Activated CD8-positive, alpha-beta T cell treated with anti-CD3 and anti-CD28 coated beads, Interleukin-2, amount 10 ng/mL, durations not matched to agents 7 days and 5 days (primary cell): ENCODE measurements at regions of chr5 and their contacts with region 1.

Region 1: DNA sequence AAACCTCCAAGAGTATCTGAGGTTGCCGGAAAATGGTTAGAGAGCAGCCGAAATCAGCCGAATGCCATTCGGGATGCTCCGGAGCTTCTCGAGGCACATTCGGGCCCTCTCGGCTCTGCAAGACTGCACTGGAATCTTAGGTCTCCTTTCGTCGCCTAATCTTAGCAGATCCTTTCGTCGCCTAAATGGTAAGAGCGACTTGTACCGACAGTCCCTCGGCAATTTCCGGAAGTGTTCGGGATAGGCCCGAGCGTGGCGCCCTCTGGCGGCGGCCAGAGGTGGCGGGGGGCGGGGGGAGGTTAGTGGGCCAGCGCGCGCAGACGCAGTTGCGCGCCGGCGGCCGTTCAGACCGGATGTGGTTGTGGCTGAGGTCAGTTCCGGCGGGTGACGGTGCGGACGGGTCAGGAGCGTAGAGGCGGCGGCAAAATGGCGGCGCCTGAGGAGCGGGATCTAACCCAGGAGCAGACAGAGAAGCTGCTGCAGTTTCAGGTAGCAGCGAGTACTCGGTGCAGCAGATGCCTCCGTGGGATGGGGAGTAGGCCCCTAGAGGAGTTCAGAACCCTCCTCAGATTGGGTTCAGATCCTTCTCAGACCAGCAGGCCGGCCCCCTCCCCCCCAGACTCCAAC is at the start of gene FAF2:
- DNase-seq: peak; percentile 97
- ATAC-seq: peak; percentile 98
- H3K4me3 Mint-ChIP-seq: peak within 1 kb of the TSS; percentile 99
- H3K27ac Mint-ChIP-seq: peak within 1 kb of the TSS; percentile 100
- H3K4me1 Mint-ChIP-seq: peaks cover 30% of the 10 kb centered on the region
- H3K27me3 Mint-ChIP-seq: peaks cover 4% of the 10 kb centered on the region
- total RNA-seq, gene FAF2: 31.3 to 31.4 TPM

Region 2: GRCh38 chr5:176429972-176430371 is 18.1 kb before region 1 on chr5:
- CTCF ChIA-PET with region 1: interaction called, 35 read pairs
- POLR2A ChIA-PET with region 1: interaction called, 7 read pairs
- DNase-seq: no peak
- ATAC-seq: peak; percentile 55
- H3K4me3 Mint-ChIP-seq: no peak overlapping the region
- H3K27ac Mint-ChIP-seq: peak overlapping the region; percentile 31
- H3K4me1 Mint-ChIP-seq: peaks cover 18% of the 10 kb centered on the region
- H3K27me3 Mint-ChIP-seq: peaks cover 3% of the 10 kb centered on the region

Region 3: DNA sequence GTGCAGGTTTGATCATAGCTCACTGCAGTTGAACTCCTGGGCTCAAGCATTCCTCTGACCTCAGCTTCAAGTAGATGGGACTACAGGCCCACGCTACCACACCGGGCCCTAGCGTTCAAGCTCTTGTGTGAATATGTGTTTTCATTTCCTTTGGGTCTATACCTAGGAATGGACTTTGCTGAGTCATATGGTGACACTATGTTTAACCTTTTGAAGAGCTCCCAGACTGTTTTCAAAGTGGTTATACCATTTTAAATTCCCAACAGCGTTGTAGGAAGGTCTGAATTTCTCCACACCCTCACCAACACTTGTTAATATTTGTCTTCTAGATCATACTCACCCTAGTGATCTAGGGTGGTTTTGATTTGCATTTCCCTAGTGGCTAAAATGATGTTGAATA is 33.6 kb after region 1 on chr5:
- CTCF ChIA-PET with region 1: interaction called, 12 read pairs
- POLR2A ChIA-PET with region 1: interaction called, 3 read pairs
- DNase-seq: no peak
- ATAC-seq: no peak
- H3K4me3 Mint-ChIP-seq: no peak overlapping the region
- H3K27ac Mint-ChIP-seq: no peak overlapping the region
- H3K4me1 Mint-ChIP-seq: peaks cover 18% of the 10 kb centered on the region
- H3K27me3 Mint-ChIP-seq: no peaks in the 10 kb centered on the region

Region 4: GRCh38 chr5:176543428-176544173 is 95.5 kb after region 1 on chr5:
- CTCF ChIA-PET with region 1: interaction called, 26 read pairs
- POLR2A ChIA-PET with region 1: interaction called, 16 read pairs
- DNase-seq: peak; percentile 82
- ATAC-seq: peak; percentile 77
- H3K4me3 Mint-ChIP-seq: peak overlapping the region; percentile 94
- H3K27ac Mint-ChIP-seq: peak overlapping the region; percentile 92
- H3K4me1 Mint-ChIP-seq: peaks cover 67% of the 10 kb centered on the region
- H3K27me3 Mint-ChIP-seq: no peaks in the 10 kb centered on the region